ENCODE measurements at regions of chr7 and their contacts with region 1.

Region 1: GRCh38 chr7:143240291-143241168 is 18.7 kb downstream of the TAS2R40 start:
- DNase-seq: peak; percentile 75
- H3K4me3 ChIP-seq: no peak overlapping the region
- H3K27ac ChIP-seq: no peak overlapping the region
- H3K4me1 ChIP-seq: peaks cover 0 to 30% (median 9%) of the 10 kb centered on the region in 4 donors
- H3K27me3 ChIP-seq: no peaks in the 10 kb centered on the region
- CTCF ChIP-seq: peak; percentile 86 to 95 (median 89)
- EP300 ChIP-seq: no peak
- POLR2A ChIP-seq: no peak

Region 2: GRCh38 chr7:143299840-143300239 is 59.3 kb after region 1 on chr7:
- in situ Hi-C with region 1: loop called in 3 of 4 experiments (anchors 5 to 10 kb)
- intact Hi-C with region 1: loop called (anchors 5 kb)
- DNase-seq: peak; percentile 65
- H3K4me3 ChIP-seq: no peak overlapping the region
- H3K27ac ChIP-seq: no peak overlapping the region
- H3K4me1 ChIP-seq: peaks cover 0 to 33% (median 4%) of the 10 kb centered on the region in 4 donors
- H3K27me3 ChIP-seq: no peaks in the 10 kb centered on the region
- CTCF ChIP-seq: peak; percentile 51 to 68 (median 59)
- EP300 ChIP-seq: no peak
- POLR2A ChIP-seq: no peak

Region 3: GRCh38 chr7:143305423-143306070 is 65.0 kb after region 1 on chr7:
- in situ Hi-C with region 1: loop called in 3 of 4 experiments (anchors 5 to 10 kb)
- intact Hi-C with region 1: loop called (anchors 5 kb)
- DNase-seq: peak; percentile 90
- H3K4me3 ChIP-seq: no peak overlapping the region
- H3K27ac ChIP-seq: no peak overlapping the region
- H3K4me1 ChIP-seq: peaks cover 0 to 9% (median 3%) of the 10 kb centered on the region in 4 donors
- H3K27me3 ChIP-seq: no peaks in the 10 kb centered on the region
- CTCF ChIP-seq: peak; percentile 72 to 91 (median 80)
- EP300 ChIP-seq: no peak
- POLR2A ChIP-seq: no peak

Region 4: DNA sequence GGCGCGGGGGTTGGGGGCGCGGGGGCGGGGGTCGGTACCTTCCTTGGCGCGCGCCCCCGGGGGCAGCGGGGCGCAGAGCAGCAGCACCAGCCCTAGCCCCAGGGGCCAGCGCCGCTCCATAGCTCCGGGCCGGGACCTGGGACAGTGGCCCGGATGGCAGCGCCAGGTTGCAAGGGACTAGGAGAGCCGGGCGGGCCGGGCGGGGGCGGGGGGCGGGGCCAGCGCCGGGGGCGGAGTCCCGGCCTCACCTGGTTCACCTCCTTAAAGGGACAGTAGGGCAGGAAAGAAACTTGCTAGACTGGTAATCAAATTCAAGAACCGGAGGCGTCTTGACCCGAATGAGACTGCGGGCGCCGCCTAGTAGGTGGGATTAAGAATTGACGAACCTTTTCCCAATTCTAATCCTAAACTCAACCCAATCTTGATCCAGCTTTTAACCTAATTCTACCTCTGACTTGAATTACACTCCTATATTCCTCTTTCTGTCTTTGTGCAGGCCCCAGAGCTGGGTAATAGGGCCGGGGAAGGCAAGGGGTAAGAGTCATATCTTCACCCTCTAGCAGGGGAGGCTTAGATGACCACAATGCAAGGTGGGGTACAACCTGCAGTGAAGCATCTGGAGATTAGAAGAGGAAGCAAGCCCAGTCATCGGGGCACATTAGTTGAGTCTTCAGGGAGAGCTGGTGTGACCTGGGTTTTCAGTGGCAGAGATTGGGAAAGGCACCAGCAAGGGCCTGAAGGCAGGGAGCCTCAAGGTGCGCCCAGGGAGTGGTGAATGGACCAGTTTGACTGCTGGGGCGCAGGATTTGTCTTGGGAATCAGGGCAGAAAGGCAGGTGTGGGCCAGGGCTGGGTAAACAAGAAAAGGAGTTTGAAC is 168.4 kb after region 1 on chr7 and contains the start of gene EPHA1:
- in situ Hi-C with region 1: loop called in 2 of 4 experiments (anchors 10 kb)
- intact Hi-C with region 1: no loop called
- DNase-seq: peak; percentile 75
- H3K4me3 ChIP-seq: peak within 1 kb of the TSS; percentile 31 to 62 (median 52)
- H3K27ac ChIP-seq: peak within 1 kb of the TSS; percentile 50 to 82 (median 78)
- H3K4me1 ChIP-seq: peaks cover 10 to 38% (median 28%) of the 10 kb centered on the region in 4 donors
- H3K27me3 ChIP-seq: no peaks in the 10 kb centered on the region
- CTCF ChIP-seq: peak; percentile 31 to 61 (median 45)
- EP300 ChIP-seq: no peak
- POLR2A ChIP-seq: no peak
- total RNA-seq, gene EPHA1: 21.1 to 29.9 (median 24.8) TPM

Region 5: GRCh38 chr7:143416565-143417149 is 176.1 kb after region 1 on chr7:
- in situ Hi-C with region 1: loop called in 1 of 4 experiments (anchors 10 kb)
- intact Hi-C with region 1: loop called (anchors 2 kb)
- DNase-seq: no peak
- H3K4me3 ChIP-seq: no peak overlapping the region
- H3K27ac ChIP-seq: no peak overlapping the region
- H3K4me1 ChIP-seq: peaks cover 0 to 7% (median 0%) of the 10 kb centered on the region in 4 donors
- H3K27me3 ChIP-seq: no peaks in the 10 kb centered on the region
- CTCF ChIP-seq: peak; percentile 74 to 79 (median 77)
- EP300 ChIP-seq: no peak
- POLR2A ChIP-seq: no peak

Region 6: DNA sequence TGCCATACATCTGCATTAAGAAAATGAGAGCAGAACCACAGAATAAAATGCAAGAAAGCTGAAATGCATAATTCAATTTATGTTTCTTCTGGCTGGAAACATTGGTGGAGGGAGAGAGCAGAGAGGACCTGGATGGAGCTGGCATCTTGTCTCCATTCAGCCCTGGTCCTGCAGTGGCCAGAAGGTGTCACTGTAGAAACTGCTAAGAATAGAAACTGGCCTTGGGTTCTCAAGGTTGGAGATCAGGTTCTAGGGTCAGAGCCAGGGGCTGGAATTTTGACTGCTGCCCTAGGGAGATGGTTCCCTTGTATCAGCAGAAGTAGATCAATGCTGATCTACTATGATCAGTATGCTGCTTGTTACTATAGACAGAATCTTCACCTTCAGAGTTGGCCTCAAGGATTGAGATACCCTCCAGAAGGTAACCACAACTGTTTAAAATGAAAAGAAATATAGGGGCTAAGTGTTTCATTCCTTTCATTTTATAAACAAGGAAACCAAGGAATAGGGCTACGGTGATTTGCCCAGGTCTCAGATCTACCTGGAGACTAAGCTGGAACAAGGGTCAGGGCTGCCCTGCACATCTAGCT is 250.3 kb after region 1 on chr7:
- in situ Hi-C with region 1: loop called in 1 of 4 experiments (anchors 10 kb)
- intact Hi-C with region 1: no loop called
- DNase-seq: no peak
- H3K4me3 ChIP-seq: no peak overlapping the region
- H3K27ac ChIP-seq: no peak overlapping the region
- H3K4me1 ChIP-seq: peaks cover 0 to 16% (median 2%) of the 10 kb centered on the region in 4 donors
- H3K27me3 ChIP-seq: no peaks in the 10 kb centered on the region
- CTCF ChIP-seq: peak; percentile 25 to 47 (median 44)
- EP300 ChIP-seq: no peak
- POLR2A ChIP-seq: no peak

Measured in transverse colon (tissue), 4 donors.